CD4-positive, alpha-beta memory T cell (primary cell): ENCODE measurements at regions of chr14 and their contacts with region 1.

Region 1: DNA sequence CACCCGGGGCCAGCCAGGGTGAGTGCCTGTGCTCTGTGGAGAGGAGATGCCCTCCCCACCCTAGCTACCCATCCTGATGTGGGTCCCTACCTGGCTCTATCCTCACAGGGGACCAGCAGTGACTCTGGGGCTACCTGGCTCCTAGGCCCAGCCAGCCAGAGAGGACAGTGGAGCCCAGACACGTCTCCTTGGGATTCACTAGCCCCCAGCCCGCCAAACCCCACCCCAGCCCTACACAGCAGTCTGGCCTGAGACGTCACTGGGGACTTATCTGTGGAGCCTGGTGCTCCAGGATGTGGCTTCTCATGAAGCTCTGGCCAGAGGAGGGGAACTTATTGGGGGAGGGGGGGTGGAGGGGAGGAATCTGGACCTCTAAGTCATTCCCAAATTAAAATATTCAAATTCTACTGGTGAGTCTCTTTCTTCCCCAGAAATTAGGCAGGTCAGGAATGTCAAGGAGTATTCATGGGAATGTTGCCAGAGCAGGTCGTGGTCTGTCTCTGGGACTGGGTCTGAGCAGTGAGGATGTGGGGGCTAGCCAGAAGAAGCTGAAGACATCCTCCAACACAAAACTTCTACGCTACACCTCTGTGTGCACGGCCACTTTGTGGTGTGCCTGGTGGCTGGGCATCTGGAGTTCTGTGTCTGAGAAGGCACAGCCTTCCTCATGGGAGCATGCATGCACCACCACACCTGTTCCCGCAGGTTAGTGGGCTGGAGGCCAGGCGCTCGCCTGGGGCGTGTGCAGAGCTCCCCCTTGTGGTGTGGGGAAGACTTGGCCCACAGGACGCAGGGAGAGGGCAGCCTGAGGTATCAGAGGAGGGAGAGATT is 2.7 kb downstream of the CMTM5 start:
- DNase-seq: peak; percentile 54 to 67 (median 65)
- H3K4me3 ChIP-seq: no peak overlapping the region
- H3K4me3 Mint-ChIP-seq: no peak overlapping the region
- H3K27ac ChIP-seq: no peak overlapping the region
- H3K27ac Mint-ChIP-seq: peak overlapping the region in 1 of 7 donors; percentile 4
- H3K4me1 ChIP-seq: no peaks in the 10 kb centered on the region
- H3K4me1 Mint-ChIP-seq: no peaks in the 10 kb centered on the region
- H3K27me3 ChIP-seq: no peaks in the 10 kb centered on the region
- H3K27me3 Mint-ChIP-seq: peaks cover 5 to 11% of the 10 kb centered on the region in 2 donors

Region 2: DNA sequence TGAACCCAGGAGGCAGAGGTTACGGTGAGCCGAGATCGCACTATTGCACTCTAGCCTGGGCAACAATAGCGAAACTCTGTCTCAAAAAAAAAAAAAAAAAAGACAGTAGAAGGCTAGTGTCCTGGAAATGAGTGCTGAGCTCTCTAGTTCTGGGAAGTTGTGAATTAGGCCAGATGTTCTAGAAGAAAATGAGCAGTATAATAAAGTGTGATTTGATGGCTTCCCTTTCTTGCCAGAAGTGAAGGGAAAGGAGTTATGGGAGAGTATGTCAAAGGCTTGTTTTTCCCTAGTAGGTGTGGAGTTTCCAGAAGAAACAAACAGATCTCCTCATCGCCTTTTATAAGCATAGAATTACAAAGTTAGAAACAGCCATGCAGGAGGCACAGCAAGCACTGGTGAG is 121.3 kb before region 1 on chr14:
- CTCF ChIA-PET with region 1: interaction called, 36 read pairs
- POLR2A ChIA-PET with region 1: no interaction called
- intact Hi-C with region 1: no loop called
- DNase-seq: no peak
- H3K4me3 ChIP-seq: no peak overlapping the region
- H3K4me3 Mint-ChIP-seq: no peak overlapping the region
- H3K27ac ChIP-seq: no peak overlapping the region
- H3K27ac Mint-ChIP-seq: peak overlapping the region in 1 of 7 donors; percentile 2
- H3K4me1 ChIP-seq: no peaks in the 10 kb centered on the region
- H3K4me1 Mint-ChIP-seq: no peaks in the 10 kb centered on the region
- H3K27me3 ChIP-seq: no peaks in the 10 kb centered on the region
- H3K27me3 Mint-ChIP-seq: peaks cover 26 to 38% of the 10 kb centered on the region in 2 donors

Region 3: DNA sequence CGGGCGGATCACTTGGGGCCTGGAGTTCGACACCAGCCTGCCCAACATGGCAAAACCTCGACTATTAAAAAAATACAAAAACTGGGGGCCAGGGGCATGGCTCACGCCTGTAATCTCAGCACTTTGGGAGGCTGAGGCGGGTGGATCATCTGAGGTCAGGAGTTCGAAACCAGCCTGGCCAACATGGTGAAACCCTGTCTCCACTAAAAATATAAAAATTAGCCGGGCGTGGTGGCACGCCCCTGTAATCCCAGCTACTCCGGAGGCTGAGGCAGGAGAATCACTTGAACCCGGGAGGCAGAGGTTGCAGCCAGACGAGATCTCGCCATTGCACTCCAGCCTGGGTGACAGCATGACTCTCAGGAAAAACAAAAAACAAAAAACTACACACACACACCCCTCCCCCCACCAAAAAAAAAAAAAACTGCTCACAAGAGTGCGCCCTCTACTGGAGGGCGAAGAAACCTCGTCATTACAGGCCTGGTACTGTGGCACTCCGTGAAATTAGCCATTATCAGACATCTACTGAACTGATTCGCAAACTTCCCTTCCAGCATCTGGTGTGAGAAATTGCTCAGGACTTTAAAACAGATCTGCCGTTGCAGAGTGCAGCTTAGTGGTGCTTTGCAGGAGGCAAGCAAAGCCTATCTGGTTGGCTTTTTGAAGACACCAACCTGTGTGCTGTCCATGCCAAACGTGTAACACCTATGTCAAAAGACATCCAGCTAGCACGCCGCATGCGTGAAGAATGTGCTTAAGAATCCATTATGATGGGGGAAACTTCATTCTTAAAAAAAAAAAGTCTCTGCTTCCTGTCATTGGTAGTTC is 84.6 kb before region 1 on chr14:
- CTCF ChIA-PET with region 1: interaction called, 12 read pairs
- POLR2A ChIA-PET with region 1: no interaction called
- intact Hi-C with region 1: no loop called
- DNase-seq: peak; percentile 48 to 75 (median 74)
- H3K4me3 ChIP-seq: no peak overlapping the region
- H3K4me3 Mint-ChIP-seq: peak overlapping the region; percentile 18 to 77 (median 40)
- H3K27ac ChIP-seq: no peak overlapping the region
- H3K27ac Mint-ChIP-seq: peak overlapping the region; percentile 4 to 97 (median 80)
- H3K4me1 ChIP-seq: peaks cover 20% of the 10 kb centered on the region
- H3K4me1 Mint-ChIP-seq: peaks cover 11 to 20% (median 17%) of the 10 kb centered on the region in 4 donors
- H3K27me3 ChIP-seq: no peaks in the 10 kb centered on the region
- H3K27me3 Mint-ChIP-seq: no peaks in the 10 kb centered on the region

Region 4: DNA sequence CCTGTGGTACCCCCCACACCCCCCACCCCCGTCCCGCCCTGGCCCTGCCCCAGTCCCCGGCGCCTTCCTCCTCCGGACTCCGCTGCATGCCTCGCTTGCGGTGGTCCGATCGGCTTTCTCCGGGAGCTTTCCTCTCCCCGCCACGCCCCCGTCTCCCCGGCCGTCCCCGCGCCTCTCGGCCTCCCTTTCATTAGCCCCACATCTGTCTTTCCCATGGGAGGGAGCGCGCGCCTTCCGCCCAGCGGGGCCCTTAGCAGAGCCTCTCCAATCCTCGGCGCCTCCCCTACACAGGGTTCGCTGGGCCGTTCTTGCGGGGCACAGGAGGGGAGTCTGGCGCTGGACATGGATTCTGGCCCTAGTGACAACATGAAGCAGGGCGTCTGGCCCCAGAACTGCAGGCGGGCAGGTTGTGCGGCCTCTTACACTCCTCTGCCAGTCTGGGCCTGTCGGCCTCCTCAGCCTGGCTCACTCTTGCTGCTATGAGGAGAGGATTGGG is 13.1 kb before region 1 on chr14:
- CTCF ChIA-PET with region 1: interaction called, 17 read pairs
- POLR2A ChIA-PET with region 1: no interaction called
- intact Hi-C with region 1: no loop called
- DNase-seq: no peak
- H3K4me3 ChIP-seq: no peak overlapping the region
- H3K4me3 Mint-ChIP-seq: no peak overlapping the region
- H3K27ac ChIP-seq: no peak overlapping the region
- H3K27ac Mint-ChIP-seq: no peak overlapping the region
- H3K4me1 ChIP-seq: no peaks in the 10 kb centered on the region
- H3K4me1 Mint-ChIP-seq: peaks cover 0 to 2% (median 0%) of the 10 kb centered on the region in 4 donors
- H3K27me3 ChIP-seq: peaks cover 6% of the 10 kb centered on the region
- H3K27me3 Mint-ChIP-seq: peaks cover 21 to 27% of the 10 kb centered on the region in 2 donors